ENCODE measurements at regions of chr21 and their contacts with region 1.

Region 1: GRCh38 chr21:44353191-44353970 is at the start of gene TRPM2:
- DNase-seq: no peak
- ATAC-seq: peak; percentile 62
- H3K4me3 ChIP-seq: peak within 1 kb of the TSS; percentile 65; the same call in 1 of the 2 replicates
- H3K27ac ChIP-seq: peak within 1 kb of the TSS; percentile 68
- H3K4me1 ChIP-seq: peaks cover 22% of the 10 kb centered on the region
- H3K27me3 ChIP-seq: no peaks in the 10 kb centered on the region
- CTCF ChIP-seq: no peak
- EP300 ChIP-seq: no peak
- POLR2A ChIP-seq: 0 out of 2 replicates have a peak, but pooled peaks have one; percentile 45
- RAD21 ChIP-seq: no peak
- polyA plus RNA-seq, gene TRPM2: 0.34 to 0.82 TPM

Region 2: DNA sequence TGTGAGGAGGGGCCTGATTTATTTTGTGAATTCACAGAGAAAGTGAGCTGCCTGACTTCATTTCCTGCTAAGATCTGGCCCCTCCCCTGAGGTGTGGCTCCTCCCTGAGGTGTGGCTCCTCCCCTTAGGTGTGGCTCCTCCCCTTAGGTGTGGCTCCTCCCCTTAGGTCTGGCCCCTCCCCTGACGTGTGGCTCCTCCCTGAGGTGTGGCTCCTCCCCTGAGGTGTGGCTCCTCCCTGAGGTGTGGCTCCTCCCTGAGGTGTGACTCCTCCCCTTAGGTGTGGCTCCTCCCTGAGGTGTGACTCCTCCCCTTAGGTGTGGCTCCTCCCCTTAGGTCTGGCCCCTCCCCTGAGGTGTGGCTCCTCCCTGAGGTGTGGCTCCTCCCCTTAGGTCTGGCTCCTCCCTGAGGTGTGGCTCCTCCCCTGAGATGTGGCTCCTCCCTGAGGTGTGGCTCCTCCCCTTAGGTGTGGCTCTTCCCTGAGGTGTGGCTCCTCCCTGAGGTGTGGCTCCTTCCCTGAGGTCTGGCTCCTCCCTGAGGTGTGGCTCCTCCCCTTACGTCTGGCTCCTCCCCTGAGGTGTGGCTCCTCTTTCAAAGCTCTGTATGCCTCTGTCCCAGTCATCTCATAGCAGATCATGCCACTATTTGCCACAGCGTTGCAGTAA is 75.0 kb after region 1 on chr21:
- CTCF ChIA-PET with region 1: no interaction called
- POLR2A ChIA-PET with region 1: no interaction called
- RAD21 ChIA-PET with region 1: no interaction called
- SMC1A ChIA-PET with region 1: no interaction called
- in situ Hi-C with region 1: loop called (anchors 5 kb)
- intact Hi-C with region 1: no loop called
- DNase-seq: no peak
- ATAC-seq: 0 out of 3 replicates have a peak, but pooled peaks have one; percentile 18
- H3K4me3 ChIP-seq: no peak overlapping the region
- H3K27ac ChIP-seq: no peak overlapping the region
- H3K4me1 ChIP-seq: no peaks in the 10 kb centered on the region; the same call in 1 of the 2 replicates
- H3K27me3 ChIP-seq: no peaks in the 10 kb centered on the region
- CTCF ChIP-seq: no peak
- EP300 ChIP-seq: no peak
- POLR2A ChIP-seq: no peak
- RAD21 ChIP-seq: no peak